K562 (cell line): ENCODE measurements at regions of chr1 and their contacts with region 1.

Region 1: GRCh38 chr1:1574721-1575537 is at the start of gene SSU72:
- DNase-seq: peak; percentile 93 to 98 (median 94)
- ATAC-seq: peak; percentile 70
- H3K4me3 ChIP-seq: peak within 1 kb of the TSS; percentile 100
- H3K27ac ChIP-seq: peak within 1 kb of the TSS; percentile 99
- H3K4me1 ChIP-seq: peaks cover 15 to 38% of the 10 kb centered on the region in 2 experiments; a peak in 4 of 5 replicates
- H3K27me3 ChIP-seq: peaks cover 0 to 12% of the 10 kb centered on the region in 2 experiments; a peak in 2 of 5 replicates
- CTCF ChIP-seq: peak in 2 of 3 experiments; percentile 9 to 22; a peak in 2 of 6 replicates
- EP300 ChIP-seq: peak; percentile 59
- POLR2A ChIP-seq: peak; percentile 98
- RAD21 ChIP-seq: no peak
- polyA plus RNA-seq, gene SSU72: 70.8 to 90.8 TPM

Region 2: GRCh38 chr1:1562556-1563195 is 12.3 kb before region 1 on chr1:
- CTCF ChIA-PET with region 1: no interaction called
- POLR2A ChIA-PET with region 1: interaction called, 13 read pairs
- in situ Hi-C with region 1: no loop called
- intact Hi-C with region 1: no loop called
- DNase-seq: no peak
- ATAC-seq: peak; percentile 11
- H3K4me3 ChIP-seq: no peak overlapping the region
- H3K27ac ChIP-seq: no peak overlapping the region
- H3K4me1 ChIP-seq: peaks cover 3 to 23% of the 10 kb centered on the region in 2 experiments; a peak in 3 of 5 replicates
- H3K27me3 ChIP-seq: no peaks in the 10 kb centered on the region
- CTCF ChIP-seq: no peak
- EP300 ChIP-seq: no peak
- POLR2A ChIP-seq: no peak; the same call in 1 of the 2 replicates
- RAD21 ChIP-seq: no peak

Region 3: DNA sequence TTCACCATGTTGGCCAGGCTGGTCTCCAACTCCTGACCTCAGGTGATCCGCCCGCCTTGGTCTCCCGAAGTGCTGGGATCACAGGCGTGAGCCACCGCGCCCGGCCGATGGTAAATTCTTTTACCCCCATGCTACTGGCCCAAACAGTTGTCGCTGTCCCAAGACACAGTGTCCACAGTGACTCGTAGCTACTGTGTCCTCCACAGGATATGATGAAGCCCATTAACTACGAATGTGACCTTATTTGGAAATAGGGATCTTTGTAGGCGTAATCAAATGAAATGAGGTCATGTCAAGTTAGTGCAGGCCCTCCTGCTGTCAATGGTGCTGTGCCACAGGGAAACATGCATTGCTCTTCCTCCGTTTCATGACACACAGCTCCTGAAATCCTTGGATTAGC is 16.5 kb after region 1 on chr1:
- CTCF ChIA-PET with region 1: no interaction called
- POLR2A ChIA-PET with region 1: interaction called, 21 read pairs
- in situ Hi-C with region 1: no loop called
- intact Hi-C with region 1: no loop called
- DNase-seq: no peak
- ATAC-seq: no peak
- H3K4me3 ChIP-seq: no peak overlapping the region
- H3K27ac ChIP-seq: no peak overlapping the region
- H3K4me1 ChIP-seq: peaks cover 0 to 22% of the 10 kb centered on the region in 2 experiments; a peak in 2 of 5 replicates
- H3K27me3 ChIP-seq: no peaks in the 10 kb centered on the region
- CTCF ChIP-seq: no peak
- EP300 ChIP-seq: no peak
- POLR2A ChIP-seq: no peak
- RAD21 ChIP-seq: no peak

Region 4: DNA sequence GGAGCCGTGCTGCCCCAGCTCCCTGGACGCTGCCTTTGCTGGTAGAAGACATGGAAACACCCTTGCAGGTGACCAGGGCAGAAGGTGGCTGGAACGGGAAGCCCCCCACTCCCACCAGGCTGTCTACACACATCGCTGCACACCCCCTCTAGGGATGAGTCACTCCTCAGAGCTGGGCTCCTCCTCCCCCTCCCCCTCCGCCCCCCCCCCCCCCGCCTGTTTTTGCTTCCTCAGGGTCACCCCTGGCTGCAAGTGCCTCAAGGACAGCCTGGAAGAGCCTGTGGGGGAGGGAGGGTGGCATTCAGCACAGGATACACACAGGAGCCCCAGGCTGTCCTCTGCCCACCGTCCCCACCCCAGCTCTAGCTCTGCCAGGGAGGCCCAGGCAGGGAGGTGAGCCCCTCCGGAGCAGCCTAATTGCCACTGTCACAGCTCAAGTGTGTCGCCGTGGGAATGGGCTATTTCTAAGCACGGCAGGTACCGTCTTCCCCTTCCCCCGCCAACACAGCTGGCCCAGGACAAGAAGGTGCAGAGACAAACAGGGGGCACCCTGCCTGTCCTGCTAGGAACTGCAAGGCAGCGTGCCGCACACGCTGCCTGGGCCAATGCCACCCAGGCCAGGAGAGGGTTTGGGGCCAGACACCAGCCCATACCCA is 22.5 kb after region 1 on chr1:
- CTCF ChIA-PET with region 1: no interaction called
- POLR2A ChIA-PET with region 1: interaction called, 13 read pairs
- in situ Hi-C with region 1: no loop called
- intact Hi-C with region 1: no loop called
- DNase-seq: peak; percentile 70 to 91 (median 90)
- ATAC-seq: peak; percentile 72
- H3K4me3 ChIP-seq: no peak overlapping the region
- H3K27ac ChIP-seq: peak overlapping the region; percentile 38; the same call in 2 of the 3 replicates
- H3K4me1 ChIP-seq: peaks cover 20 to 70% of the 10 kb centered on the region in 2 experiments; a peak in 4 of 5 replicates
- H3K27me3 ChIP-seq: no peaks in the 10 kb centered on the region
- CTCF ChIP-seq: peak; percentile 17 to 32 (median 21); a peak in 3 of 6 replicates
- EP300 ChIP-seq: no peak
- POLR2A ChIP-seq: no peak
- RAD21 ChIP-seq: no peak

Region 5: GRCh38 chr1:1615256-1616044 is 40.5 kb after region 1 on chr1 and contains the start of gene MIB2:
- CTCF ChIA-PET with region 1: interaction called, 5 read pairs
- POLR2A ChIA-PET with region 1: interaction called, 13 read pairs
- in situ Hi-C with region 1: no loop called
- intact Hi-C with region 1: loop called (anchors 1 kb)
- DNase-seq: peak; percentile 99 to 100 (median 99)
- ATAC-seq: peak; percentile 92
- H3K4me3 ChIP-seq: peak within 1 kb of the TSS; percentile 87
- H3K27ac ChIP-seq: peak within 1 kb of the TSS; percentile 99
- H3K4me1 ChIP-seq: peaks cover 14 to 70% of the 10 kb centered on the region in 2 experiments; a peak in 4 of 5 replicates
- H3K27me3 ChIP-seq: no peaks in the 10 kb centered on the region; a peak in 1 of 5 replicates
- CTCF ChIP-seq: 0 out of 6 replicates have a peak, but pooled peaks of 1 of the 3 experiments have one; percentile 3
- EP300 ChIP-seq: 0 out of 2 replicates have a peak, but pooled peaks have one; percentile 22
- POLR2A ChIP-seq: peak; percentile 98
- RAD21 ChIP-seq: peak in 1 of 2 experiments; percentile 20; a peak in 1 of 4 replicates
- polyA plus RNA-seq, gene MIB2: 0.04 TPM in 1 of 2 experiments, not detected in the other